ENCODE measurements at regions of chr16 and their contacts with region 1.

Region 1: GRCh38 chr16:1073566-1074378 is 1.2 kb downstream of the SSTR5 start:
- DNase-seq: no peak
- ATAC-seq: peak; percentile 4
- H3K4me3 ChIP-seq: no peak overlapping the region
- H3K27ac ChIP-seq: no peak overlapping the region
- H3K4me1 ChIP-seq: peaks cover 8% of the 10 kb centered on the region
- H3K27me3 ChIP-seq: no peaks in the 10 kb centered on the region
- CTCF ChIP-seq: no peak; the same call in 1 of the 2 replicates

Region 2: GRCh38 chr16:1089822-1090619 is 16.2 kb after region 1 on chr16:
- CTCF ChIA-PET with region 1: no interaction called
- POLR2A ChIA-PET with region 1: interaction called, 3 read pairs
- intact Hi-C with region 1: loop called (anchors 2 kb)
- DNase-seq: peak; percentile 45
- ATAC-seq: peak; percentile 70
- H3K4me3 ChIP-seq: peak overlapping the region; percentile 55; the same call in 1 of the 2 replicates
- H3K27ac ChIP-seq: no peak overlapping the region
- H3K4me1 ChIP-seq: peaks cover 8% of the 10 kb centered on the region; the same call in 1 of the 2 replicates
- H3K27me3 ChIP-seq: no peaks in the 10 kb centered on the region
- CTCF ChIP-seq: peak; percentile 27; the same call in 1 of the 2 replicates